Heart right ventricle (tissue), 16 donors: ENCODE measurements at regions of chr17 and their contacts with region 1.

Region 1: GRCh38 chr17:55717898-55718735 is 4.5 kb downstream of the TMEM100 start:
- DNase-seq: peak; percentile 51 to 81
- ATAC-seq: peak in 6 of 8 donors; percentile 25 to 57 (median 36)
- H3K4me3 ChIP-seq: no peak overlapping the region
- H3K27ac ChIP-seq: no peak overlapping the region
- H3K4me1 ChIP-seq: peaks cover 0 to 15% (median 4%) of the 10 kb centered on the region in 9 donors
- H3K27me3 ChIP-seq: peaks cover 0 to 6% (median 0%) of the 10 kb centered on the region in 7 donors
- CTCF ChIP-seq: peak; percentile 63 to 89 (median 78)

Region 2: DNA sequence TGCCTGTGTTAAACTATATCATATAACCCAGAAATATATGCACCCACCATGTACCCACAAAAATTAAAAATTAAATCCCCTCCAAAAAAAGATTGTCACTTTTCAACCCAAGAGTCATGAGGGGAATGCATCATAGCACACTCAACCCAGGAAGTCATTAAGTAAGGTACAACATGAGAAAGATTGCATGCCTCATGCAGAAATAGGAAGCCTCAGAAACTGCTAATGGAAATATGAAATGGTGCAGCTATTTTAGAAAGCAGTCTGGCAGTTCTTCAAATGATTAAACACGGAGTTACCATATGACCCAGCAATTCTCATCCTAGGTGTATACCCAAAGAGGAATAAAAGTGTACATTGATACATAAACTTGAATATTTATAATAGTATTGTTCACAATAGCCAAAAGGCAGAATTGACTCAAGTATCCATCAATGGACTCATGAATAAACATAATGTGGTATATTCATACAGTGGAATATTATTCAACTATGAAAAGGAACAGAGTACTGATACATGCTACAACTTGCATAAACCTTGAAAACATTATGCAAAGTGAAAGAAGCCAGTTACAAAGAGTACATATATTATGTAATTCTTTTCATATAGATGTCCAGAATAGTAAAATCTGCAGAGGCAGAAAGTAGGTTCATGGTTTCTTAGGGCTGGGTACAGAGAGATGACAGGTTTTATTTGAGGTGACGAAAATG is 65.8 kb before region 1 on chr17:
- intact Hi-C with region 1: loop called in 1 of 10 experiments (anchors 5 kb)
- DNase-seq: no peak
- ATAC-seq: no peak
- H3K4me3 ChIP-seq: no peak overlapping the region
- H3K27ac ChIP-seq: no peak overlapping the region
- H3K4me1 ChIP-seq: no peaks in the 10 kb centered on the region
- H3K27me3 ChIP-seq: peaks cover 0 to 7% (median 0%) of the 10 kb centered on the region in 7 donors
- CTCF ChIP-seq: no peak

Region 3: GRCh38 chr17:55763851-55764250 is 45.7 kb after region 1 on chr17:
- intact Hi-C with region 1: loop called in 2 of 10 experiments (anchors 5 kb)
- DNase-seq: no peak
- ATAC-seq: peak in 4 of 8 donors; percentile 19 to 86 (median 46)
- H3K4me3 ChIP-seq: no peak overlapping the region
- H3K27ac ChIP-seq: peak overlapping the region in 1 of 10 donors; percentile 13
- H3K4me1 ChIP-seq: peaks cover 0 to 32% (median 21%) of the 10 kb centered on the region in 9 donors
- H3K27me3 ChIP-seq: no peaks in the 10 kb centered on the region
- CTCF ChIP-seq: no peak

Region 4: GRCh38 chr17:55852734-55853133 is 134.6 kb after region 1 on chr17:
- intact Hi-C with region 1: no loop called
- DNase-seq: no peak
- ATAC-seq: no peak
- H3K4me3 ChIP-seq: no peak overlapping the region
- H3K27ac ChIP-seq: no peak overlapping the region
- H3K4me1 ChIP-seq: no peaks in the 10 kb centered on the region
- H3K27me3 ChIP-seq: peaks cover 0 to 5% (median 0%) of the 10 kb centered on the region in 7 donors
- CTCF ChIP-seq: no peak